Activated T-helper 2 cell treated with anti-CD3 and anti-CD28 coated beads, Interferon-gamma antibody, Interleukin-2, Interleukin-4, amounts not matched to agents 10 μg/mL and 5 μg/mL and 100 μg/mL, durations not matched to agents 14 hours and 24 hours and 36 hours (primary cell): ENCODE measurements at regions of chr15 and their contacts with region 1.

Region 1: GRCh38 chr15:48965972-48966371 is 2.3 kb upstream of the SHC4 start:
- DNase-seq: no peak
- H3K4me3 Mint-ChIP-seq: peak overlapping the region; percentile 16
- H3K27ac Mint-ChIP-seq: peak overlapping the region; percentile 97
- H3K4me1 Mint-ChIP-seq: peaks cover 72% of the 10 kb centered on the region
- H3K27me3 Mint-ChIP-seq: no peaks in the 10 kb centered on the region

Region 2: DNA sequence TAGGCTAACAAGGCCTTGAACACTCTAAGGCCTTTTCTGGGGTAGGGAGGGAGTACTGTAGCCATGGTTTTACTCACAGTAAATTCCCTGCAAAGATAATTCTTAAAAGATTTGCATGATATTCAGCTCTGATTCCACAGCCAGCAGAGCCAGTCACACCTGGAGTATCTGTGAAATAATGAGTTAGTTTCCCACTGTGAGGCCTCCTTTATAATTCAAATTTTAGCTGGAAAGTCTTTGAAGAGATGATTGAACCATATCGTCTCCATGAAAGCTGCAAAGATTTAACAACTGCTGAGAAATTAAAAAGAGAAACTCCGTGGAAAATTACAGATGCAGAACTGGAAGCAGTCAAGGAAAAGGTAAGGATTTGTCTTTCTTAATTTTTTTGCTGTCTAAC is 667.1 kb before region 1 on chr15:
- intact Hi-C with region 1: no loop called
- DNase-seq: no peak
- H3K4me3 Mint-ChIP-seq: no peak overlapping the region
- H3K27ac Mint-ChIP-seq: no peak overlapping the region
- H3K4me1 Mint-ChIP-seq: no peaks in the 10 kb centered on the region
- H3K27me3 Mint-ChIP-seq: peaks cover 9% of the 10 kb centered on the region

Region 3: DNA sequence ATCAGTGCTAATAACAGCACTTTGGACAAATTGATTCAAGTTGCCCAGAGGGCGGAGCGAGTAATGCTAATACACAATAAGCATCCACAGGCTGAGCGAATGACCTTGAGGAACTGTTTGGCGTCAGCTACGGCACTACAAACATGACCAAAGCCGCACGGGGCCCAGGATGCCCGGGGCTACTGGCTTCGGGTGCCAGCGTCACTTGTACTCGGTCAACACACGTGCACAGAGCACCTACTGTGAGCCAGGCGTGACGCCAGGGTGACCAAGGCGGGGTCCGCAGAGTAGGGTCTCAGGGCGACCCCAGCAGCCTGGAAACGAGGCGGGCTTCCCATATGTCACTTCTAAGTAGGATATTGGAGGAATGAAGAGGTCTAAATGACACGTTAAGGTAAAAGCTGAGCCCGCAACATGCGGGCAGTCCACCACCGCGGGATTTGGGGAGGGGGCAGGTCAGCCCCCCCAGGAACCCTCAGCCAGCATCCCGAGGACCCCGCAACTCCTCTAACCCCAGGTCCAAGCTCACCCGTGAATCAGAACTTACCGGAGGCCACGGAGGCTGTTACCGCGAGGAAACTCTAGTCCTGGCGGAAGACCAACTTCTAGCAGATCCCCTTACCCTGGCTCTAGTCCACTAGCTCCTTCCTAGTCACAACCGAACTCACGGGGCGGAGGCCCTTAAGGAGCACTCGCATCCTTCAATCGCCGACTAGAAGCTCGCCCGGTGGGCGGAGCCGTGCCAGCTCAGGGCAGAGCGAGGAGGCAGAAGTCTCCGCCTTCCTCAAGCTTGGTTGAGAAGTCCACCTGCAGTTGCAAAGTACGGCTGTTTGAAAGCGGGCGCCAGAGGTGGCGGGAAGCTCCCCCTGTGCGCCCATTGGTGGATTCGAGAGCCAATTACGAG is 155.3 kb before region 1 on chr15 and contains the start of gene CEP152:
- intact Hi-C with region 1: loop called (anchors 5 kb)
- DNase-seq: peak; percentile 99
- H3K4me3 Mint-ChIP-seq: peak within 1 kb of the TSS; percentile 97
- H3K27ac Mint-ChIP-seq: peak within 1 kb of the TSS; percentile 97
- H3K4me1 Mint-ChIP-seq: peaks cover 31% of the 10 kb centered on the region
- H3K27me3 Mint-ChIP-seq: peaks cover 11% of the 10 kb centered on the region
- total RNA-seq, gene CEP152: 26.2 and 29.2 TPM in 2 replicates

Region 4: GRCh38 chr15:48946088-48946839 is 19.7 kb before region 1 on chr15:
- intact Hi-C with region 1: loop called (anchors 1 kb)
- DNase-seq: no peak
- H3K4me3 Mint-ChIP-seq: no peak overlapping the region
- H3K27ac Mint-ChIP-seq: peak overlapping the region; percentile 86
- H3K4me1 Mint-ChIP-seq: peaks cover 34% of the 10 kb centered on the region
- H3K27me3 Mint-ChIP-seq: no peaks in the 10 kb centered on the region

Region 5: GRCh38 chr15:49046220-49047102 is 80.5 kb after region 1 on chr15 and contains the start of gene SECISBP2L:
- intact Hi-C with region 1: loop called (anchors 2 kb)
- DNase-seq: peak; percentile 88
- H3K4me3 Mint-ChIP-seq: peak within 1 kb of the TSS; percentile 97
- H3K27ac Mint-ChIP-seq: peak within 1 kb of the TSS; percentile 83
- H3K4me1 Mint-ChIP-seq: peaks cover 27% of the 10 kb centered on the region
- H3K27me3 Mint-ChIP-seq: no peaks in the 10 kb centered on the region
- total RNA-seq, gene SECISBP2L: 33.5 and 37.0 TPM in 2 replicates

Region 6: DNA sequence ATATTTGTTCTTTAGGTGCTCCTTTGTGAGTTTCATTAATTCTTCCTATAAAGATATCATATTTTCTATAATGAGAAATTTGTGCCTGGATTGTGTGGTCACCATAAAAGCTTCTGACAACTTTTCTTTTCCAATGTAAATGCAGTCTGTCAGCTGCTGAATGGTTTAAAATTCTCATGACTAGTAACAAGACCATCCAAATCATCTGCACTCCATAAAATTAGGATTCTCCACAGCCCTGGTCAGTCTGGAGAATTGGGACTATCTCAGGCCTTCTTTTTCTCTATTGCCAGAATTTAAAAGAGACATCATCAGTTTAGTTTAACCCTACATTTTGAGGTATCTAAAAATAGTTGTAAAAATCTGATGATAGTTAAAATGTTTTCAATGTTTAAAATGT is 835.8 kb after region 1 on chr15:
- intact Hi-C with region 1: no loop called
- DNase-seq: no peak
- H3K4me3 Mint-ChIP-seq: no peak overlapping the region
- H3K27ac Mint-ChIP-seq: no peak overlapping the region
- H3K4me1 Mint-ChIP-seq: no peaks in the 10 kb centered on the region
- H3K27me3 Mint-ChIP-seq: no peaks in the 10 kb centered on the region